Caco-2 (cell line): ENCODE measurements at regions of chr16 and their contacts with region 1.

Region 1: DNA sequence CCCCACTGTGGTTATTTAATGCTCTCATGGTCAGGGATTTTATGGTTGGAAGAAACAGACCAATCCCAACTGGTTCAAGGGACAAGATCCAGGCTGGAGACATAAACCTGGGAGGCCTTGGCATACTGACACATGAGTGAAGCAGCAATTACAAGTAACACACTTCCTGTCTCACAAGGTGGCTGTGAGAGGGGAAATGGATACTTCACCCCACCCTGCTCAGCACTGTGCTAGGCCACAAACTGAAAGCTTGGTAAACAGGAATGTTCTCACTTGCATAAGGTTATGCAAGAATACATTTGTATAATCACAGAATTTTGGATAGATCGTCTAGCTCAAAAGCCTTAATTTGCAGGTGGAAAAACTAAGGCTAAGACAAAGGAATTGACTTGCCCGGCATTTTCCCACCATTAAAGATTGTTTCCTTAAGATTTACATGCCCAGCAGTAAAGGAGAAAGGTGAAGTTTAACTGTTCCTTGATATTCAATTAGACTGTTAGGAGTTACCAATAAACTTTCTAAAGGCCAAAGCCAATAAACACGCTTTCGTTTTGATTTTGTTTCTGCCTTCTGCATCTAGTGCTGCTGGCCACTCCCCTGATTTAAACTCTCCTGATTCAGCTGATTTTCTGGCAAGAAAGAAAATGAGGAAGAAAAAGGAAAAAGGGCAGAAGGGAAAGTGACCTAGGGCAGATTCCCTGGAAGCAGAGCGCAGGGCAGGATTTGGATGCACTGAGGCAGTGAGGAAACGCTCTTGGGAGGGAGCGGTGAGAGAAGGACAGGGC is 215.6 kb upstream of the CDH5 start:
- DNase-seq: no peak
- H3K4me3 ChIP-seq: no peak overlapping the region
- H3K4me3 Mint-ChIP-seq: peak overlapping the region; percentile 56
- H3K27ac Mint-ChIP-seq: peak overlapping the region; percentile 84
- H3K4me1 ChIP-seq: peaks cover 48% of the 10 kb centered on the region
- H3K4me1 Mint-ChIP-seq: peaks cover 33% of the 10 kb centered on the region
- H3K27me3 ChIP-seq: no peaks in the 10 kb centered on the region
- H3K27me3 Mint-ChIP-seq: no peaks in the 10 kb centered on the region
- CTCF ChIP-seq: no peak

Region 2: DNA sequence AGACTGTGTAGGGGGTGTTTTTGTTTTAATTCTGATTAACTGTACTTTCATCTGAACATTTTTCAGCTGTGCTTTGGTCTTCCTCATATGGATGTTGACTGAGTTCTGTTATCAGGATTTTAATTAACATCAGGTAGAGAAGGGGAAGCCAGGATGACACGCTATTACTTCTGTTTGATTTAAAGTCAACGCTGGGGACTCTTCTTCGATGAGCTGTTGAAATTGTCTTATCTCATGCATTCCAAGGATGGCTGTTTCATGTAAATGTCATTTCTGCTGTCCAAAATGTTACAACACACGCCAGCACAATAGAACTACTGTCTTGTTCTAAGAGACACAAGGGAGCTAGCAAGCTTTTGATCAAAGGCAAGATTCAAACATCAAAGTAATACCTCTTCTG is 47.7 kb before region 1 on chr16:
- CTCF ChIA-PET with region 1: interaction called, 4 read pairs
- POLR2A ChIA-PET with region 1: interaction called, 5 read pairs
- intact Hi-C with region 1: loop called (anchors 1 kb)
- DNase-seq: peak in 1 of 2 experiments; percentile 54
- H3K4me3 ChIP-seq: no peak overlapping the region
- H3K4me3 Mint-ChIP-seq: no peak overlapping the region
- H3K27ac Mint-ChIP-seq: no peak overlapping the region
- H3K4me1 ChIP-seq: peaks cover 17% of the 10 kb centered on the region
- H3K4me1 Mint-ChIP-seq: no peaks in the 10 kb centered on the region
- H3K27me3 ChIP-seq: no peaks in the 10 kb centered on the region
- H3K27me3 Mint-ChIP-seq: no peaks in the 10 kb centered on the region
- CTCF ChIP-seq: no peak

Region 3: DNA sequence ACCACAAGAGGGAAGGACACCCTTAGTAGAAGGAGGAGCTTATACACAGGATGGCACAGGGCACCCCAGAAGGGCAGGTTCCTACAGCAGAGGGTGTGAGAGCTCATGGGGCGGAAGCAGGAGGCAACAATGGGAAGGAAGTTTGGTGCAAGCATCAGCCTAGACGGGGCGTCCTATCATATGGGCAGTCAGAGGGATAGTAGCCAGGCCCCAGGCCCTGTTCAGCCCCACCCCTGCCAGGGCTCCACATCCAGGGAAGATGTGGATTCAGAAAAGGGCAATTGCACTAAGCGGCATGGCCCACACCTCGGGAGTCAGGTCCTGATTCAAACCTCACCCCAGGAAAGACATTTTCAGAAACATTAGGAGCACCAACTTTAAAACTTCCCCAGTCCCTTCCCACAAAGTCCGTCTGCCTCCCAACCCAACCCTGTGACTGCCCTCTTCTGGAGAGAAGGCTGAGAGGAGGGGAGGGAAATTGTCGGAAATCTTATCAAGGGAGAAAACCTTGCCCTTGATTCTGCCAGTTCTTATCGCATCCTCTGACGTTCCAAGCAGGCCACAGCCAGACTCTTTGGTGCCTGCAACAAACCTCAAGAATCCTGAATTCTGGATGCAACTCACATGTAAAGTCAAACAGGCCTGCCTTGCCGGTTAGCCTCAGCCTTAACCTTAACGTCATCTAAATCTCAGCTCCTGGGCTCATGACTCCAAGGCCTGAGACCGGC is 16.8 kb after region 1 on chr16:
- CTCF ChIA-PET with region 1: interaction called, 4 read pairs
- POLR2A ChIA-PET with region 1: interaction called, 7 read pairs
- intact Hi-C with region 1: loop called (anchors 2 kb)
- DNase-seq: peak in 1 of 2 experiments; percentile 40
- H3K4me3 ChIP-seq: no peak overlapping the region
- H3K4me3 Mint-ChIP-seq: no peak overlapping the region
- H3K27ac Mint-ChIP-seq: no peak overlapping the region
- H3K4me1 ChIP-seq: peaks cover 7% of the 10 kb centered on the region; the same call in 1 of the 2 replicates
- H3K4me1 Mint-ChIP-seq: peaks cover 5% of the 10 kb centered on the region
- H3K27me3 ChIP-seq: no peaks in the 10 kb centered on the region
- H3K27me3 Mint-ChIP-seq: no peaks in the 10 kb centered on the region
- CTCF ChIP-seq: peak; percentile 20 to 40

Region 4: DNA sequence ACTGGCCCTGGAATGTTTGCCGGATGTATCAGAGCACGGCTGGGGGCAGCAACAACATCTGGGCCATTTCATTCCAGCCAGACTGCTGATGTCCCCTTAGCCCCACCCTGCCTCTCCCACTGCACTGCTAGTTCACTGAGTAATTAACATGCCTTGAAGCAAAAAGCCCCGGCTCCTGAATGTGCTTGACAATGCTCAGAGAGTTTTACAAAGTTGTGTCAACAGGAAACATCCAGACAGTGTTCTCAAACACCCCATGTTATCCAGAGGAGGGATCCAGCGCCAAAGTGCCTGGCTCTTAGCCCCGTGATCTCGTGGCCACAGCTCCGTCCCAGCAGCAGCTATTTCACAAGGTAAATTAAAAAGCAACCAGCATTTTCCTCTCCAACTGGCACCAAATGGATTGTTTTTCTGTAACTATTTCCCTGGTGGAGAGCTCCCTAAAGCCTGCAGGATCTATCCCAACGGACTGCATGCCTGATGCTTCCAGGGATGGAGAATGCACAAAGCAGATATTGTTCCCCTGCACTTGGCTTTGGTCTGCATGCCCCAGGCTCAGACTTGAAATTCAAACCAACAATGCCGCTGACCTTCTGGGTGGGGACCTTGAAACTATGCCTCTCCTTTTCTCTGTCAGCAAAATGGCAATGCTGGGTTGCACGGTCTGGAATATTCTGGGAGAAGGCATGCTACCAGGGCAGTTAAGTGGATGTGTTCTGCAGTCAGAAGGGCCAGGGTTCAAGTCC is 100.0 kb after region 1 on chr16:
- CTCF ChIA-PET with region 1: no interaction called
- POLR2A ChIA-PET with region 1: no interaction called
- intact Hi-C with region 1: no loop called
- DNase-seq: no peak
- H3K4me3 ChIP-seq: no peak overlapping the region
- H3K4me3 Mint-ChIP-seq: no peak overlapping the region
- H3K27ac Mint-ChIP-seq: no peak overlapping the region
- H3K4me1 ChIP-seq: peaks cover 5% of the 10 kb centered on the region; the same call in 1 of the 2 replicates
- H3K4me1 Mint-ChIP-seq: no peaks in the 10 kb centered on the region
- H3K27me3 ChIP-seq: no peaks in the 10 kb centered on the region
- H3K27me3 Mint-ChIP-seq: peaks cover 2% of the 10 kb centered on the region
- CTCF ChIP-seq: no peak

Region 5: GRCh38 chr16:66275775-66276428 is 125.0 kb after region 1 on chr16:
- CTCF ChIA-PET with region 1: interaction called, 3 read pairs
- POLR2A ChIA-PET with region 1: no interaction called
- intact Hi-C with region 1: loop called (anchors 1 kb)
- DNase-seq: peak; percentile 60 to 71
- H3K4me3 ChIP-seq: no peak overlapping the region
- H3K4me3 Mint-ChIP-seq: no peak overlapping the region
- H3K27ac Mint-ChIP-seq: no peak overlapping the region
- H3K4me1 ChIP-seq: peaks cover 18% of the 10 kb centered on the region
- H3K4me1 Mint-ChIP-seq: peaks cover 25% of the 10 kb centered on the region
- H3K27me3 ChIP-seq: no peaks in the 10 kb centered on the region
- H3K27me3 Mint-ChIP-seq: peaks cover 5% of the 10 kb centered on the region
- CTCF ChIP-seq: peak; percentile 61 to 62